MCF 10A (cell line): ENCODE measurements at regions of chr1 and their contacts with region 1.

Region 1: DNA sequence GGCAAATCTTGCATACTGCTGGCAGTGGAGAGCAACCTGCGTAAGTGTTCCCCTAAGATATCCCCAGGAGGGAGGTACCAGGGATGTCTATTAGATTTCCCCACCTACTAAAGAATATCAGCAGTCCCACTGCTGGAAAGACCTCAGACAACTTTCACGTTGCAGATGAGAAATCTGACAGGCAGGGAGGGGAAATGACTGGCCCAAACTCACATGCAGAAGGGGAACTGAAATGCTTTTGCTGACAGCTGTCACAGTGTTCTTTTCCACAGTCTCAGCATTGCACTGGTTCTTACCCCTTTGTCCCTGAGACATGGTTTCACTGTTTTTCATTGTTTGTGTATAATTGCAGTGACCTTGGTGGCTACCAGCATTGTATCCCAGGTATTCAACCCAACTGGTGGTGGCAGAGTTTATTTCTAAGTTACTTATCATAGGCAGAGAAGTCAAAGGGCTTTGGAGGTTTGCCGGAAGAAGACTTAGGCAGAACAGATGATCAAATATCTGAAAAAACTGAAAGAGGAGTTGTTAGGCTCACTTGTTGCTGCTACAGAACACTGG is 84.8 kb upstream of the ATP1A1 start:
- DNase-seq: no peak
- H3K4me3 Mint-ChIP-seq: no peak overlapping the region
- H3K27ac Mint-ChIP-seq: peak overlapping the region; percentile 55
- H3K4me1 Mint-ChIP-seq: peaks cover 59% of the 10 kb centered on the region
- H3K27me3 Mint-ChIP-seq: no peaks in the 10 kb centered on the region
- CTCF ChIP-seq: no peak

Region 2: DNA sequence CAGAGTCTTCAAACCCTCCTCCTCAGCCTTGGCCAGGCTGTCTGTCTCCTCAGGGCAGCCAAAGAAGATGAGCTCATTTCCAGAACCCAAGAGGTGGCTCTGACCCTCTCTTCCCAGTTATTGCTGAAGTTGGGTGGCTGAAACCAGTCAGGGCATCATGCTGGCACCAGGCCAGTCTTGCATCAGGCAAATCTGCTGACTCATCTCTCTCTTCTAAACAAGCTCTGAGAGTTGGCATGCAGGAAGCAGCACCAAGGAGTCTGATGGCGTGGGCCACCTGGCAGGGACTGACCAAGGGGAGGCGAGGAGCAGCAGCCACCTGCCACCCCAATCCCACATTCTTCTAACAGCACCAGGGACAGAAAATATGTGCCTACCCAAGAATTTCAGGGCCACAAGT is 20.1 kb before region 1 on chr1:
- CTCF ChIA-PET with region 1: interaction called, 3 read pairs
- POLR2A ChIA-PET with region 1: interaction called, 35 read pairs
- intact Hi-C with region 1: no loop called
- DNase-seq: peak; percentile 98
- H3K4me3 Mint-ChIP-seq: no peak overlapping the region
- H3K27ac Mint-ChIP-seq: peak overlapping the region; percentile 47
- H3K4me1 Mint-ChIP-seq: peaks cover 18% of the 10 kb centered on the region
- H3K27me3 Mint-ChIP-seq: no peaks in the 10 kb centered on the region
- CTCF ChIP-seq: no peak

Region 3: DNA sequence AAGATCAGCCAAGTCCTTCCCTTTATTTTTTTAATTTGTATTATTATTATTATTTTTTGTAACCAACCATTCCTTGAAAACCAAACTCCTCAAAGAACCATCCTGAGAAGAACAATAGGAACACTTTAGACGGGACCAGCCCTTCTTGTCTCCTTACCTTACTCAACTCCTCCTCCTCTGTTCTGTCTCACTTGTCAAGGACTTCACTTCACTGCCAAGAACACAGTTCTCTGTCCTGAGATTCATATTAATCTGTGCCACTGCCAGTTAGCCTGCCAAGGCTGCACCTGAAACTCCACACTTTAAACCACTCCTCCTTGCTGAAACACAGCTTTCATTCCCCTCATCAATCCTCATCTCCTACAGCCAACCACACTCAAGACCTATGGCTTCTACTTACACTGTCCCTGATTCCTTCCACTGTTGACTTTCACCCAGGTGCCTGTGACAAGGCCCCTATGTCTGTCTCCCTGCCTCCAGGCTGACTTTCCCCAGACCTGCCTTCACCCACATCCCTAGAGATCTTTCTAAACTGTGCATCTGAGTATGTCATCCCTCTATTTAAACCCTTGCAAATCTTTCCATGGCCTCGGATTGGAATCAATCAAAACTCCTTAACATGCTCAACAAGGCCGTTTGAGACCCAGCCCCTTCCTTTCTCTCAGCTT is 11.1 kb after region 1 on chr1:
- CTCF ChIA-PET with region 1: no interaction called
- POLR2A ChIA-PET with region 1: interaction called, 10 read pairs
- intact Hi-C with region 1: no loop called
- DNase-seq: no peak
- H3K4me3 Mint-ChIP-seq: no peak overlapping the region
- H3K27ac Mint-ChIP-seq: peak overlapping the region; percentile 12
- H3K4me1 Mint-ChIP-seq: peaks cover 12% of the 10 kb centered on the region
- H3K27me3 Mint-ChIP-seq: no peaks in the 10 kb centered on the region
- CTCF ChIP-seq: no peak

Region 4: DNA sequence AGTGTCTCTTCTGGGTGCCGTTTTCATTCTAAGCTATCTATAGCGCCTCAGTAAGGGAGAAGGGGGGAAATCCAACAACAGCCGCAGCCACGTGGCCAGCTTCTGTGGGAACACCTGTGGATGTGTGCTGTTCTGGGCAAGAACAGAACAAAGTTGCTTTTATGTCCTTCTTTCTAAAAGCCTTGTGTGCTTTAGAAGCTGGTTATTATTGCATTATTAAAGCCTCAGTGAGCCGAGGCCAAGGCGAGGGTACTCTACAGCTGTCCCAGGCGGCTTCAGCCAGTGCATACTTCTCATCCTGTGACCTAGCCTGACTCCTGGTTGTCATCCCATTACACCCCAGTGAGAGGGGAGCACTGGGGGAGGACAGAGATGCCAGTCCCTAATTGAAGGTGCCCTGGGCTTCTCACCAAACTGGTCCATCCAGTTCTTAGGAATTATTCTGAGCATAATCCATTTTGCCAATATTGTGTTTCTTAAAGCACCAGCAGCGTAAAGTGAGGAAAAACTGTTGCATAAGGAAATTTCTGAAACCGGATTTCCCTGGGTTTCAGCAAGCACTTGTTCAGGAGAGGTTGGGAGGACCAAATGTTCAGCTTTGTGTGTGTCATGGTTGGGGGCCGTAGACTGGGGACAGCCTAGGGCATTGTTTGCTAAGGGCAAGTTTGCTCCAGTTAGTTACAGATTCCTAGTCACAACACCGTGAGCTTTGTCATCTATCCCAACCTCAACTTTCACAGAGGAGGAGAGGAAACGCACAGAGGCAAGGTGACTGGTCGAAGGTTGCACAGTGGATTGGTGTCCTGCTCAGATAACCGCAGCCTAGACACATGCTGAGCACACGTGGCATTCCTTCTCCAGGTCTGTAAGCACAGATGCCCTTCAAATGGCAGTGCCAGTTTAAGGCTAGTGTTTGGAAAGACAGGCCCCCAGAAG is 23.7 kb after region 1 on chr1:
- CTCF ChIA-PET with region 1: no interaction called
- POLR2A ChIA-PET with region 1: interaction called, 23 read pairs
- intact Hi-C with region 1: no loop called
- DNase-seq: no peak
- H3K4me3 Mint-ChIP-seq: no peak overlapping the region
- H3K27ac Mint-ChIP-seq: no peak overlapping the region
- H3K4me1 Mint-ChIP-seq: peaks cover 11% of the 10 kb centered on the region
- H3K27me3 Mint-ChIP-seq: no peaks in the 10 kb centered on the region
- CTCF ChIP-seq: no peak

Region 5: DNA sequence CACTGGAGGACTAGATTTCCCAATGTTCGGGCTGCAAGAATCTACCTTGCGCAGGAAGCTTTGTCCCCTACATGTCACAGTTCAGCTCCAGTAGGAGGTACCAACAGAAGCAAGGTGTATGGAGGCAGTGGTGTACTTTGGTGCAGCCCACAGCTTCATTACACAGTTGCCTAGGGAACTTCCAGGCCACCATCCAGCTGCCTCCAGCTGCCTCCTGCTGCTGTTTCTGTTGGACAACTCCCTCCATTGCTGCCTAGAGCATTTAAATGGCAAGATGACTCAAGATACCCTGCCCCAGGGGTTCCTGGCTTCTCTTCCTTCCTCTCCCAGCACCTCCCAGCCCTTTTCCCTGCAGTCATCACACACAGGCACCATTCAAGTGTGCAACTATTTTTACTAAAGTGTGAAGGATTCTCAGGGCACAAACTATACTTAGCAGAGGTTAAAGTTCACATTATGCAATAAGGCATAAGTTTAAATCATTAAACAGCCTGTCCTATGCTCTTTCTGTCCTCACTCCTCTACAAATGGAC is 45.8 kb after region 1 on chr1:
- CTCF ChIA-PET with region 1: no interaction called
- POLR2A ChIA-PET with region 1: interaction called, 13 read pairs
- intact Hi-C with region 1: no loop called
- DNase-seq: peak; percentile 94
- H3K4me3 Mint-ChIP-seq: no peak overlapping the region
- H3K27ac Mint-ChIP-seq: no peak overlapping the region
- H3K4me1 Mint-ChIP-seq: peaks cover 24% of the 10 kb centered on the region
- H3K27me3 Mint-ChIP-seq: no peaks in the 10 kb centered on the region
- CTCF ChIP-seq: no peak

Region 6: DNA sequence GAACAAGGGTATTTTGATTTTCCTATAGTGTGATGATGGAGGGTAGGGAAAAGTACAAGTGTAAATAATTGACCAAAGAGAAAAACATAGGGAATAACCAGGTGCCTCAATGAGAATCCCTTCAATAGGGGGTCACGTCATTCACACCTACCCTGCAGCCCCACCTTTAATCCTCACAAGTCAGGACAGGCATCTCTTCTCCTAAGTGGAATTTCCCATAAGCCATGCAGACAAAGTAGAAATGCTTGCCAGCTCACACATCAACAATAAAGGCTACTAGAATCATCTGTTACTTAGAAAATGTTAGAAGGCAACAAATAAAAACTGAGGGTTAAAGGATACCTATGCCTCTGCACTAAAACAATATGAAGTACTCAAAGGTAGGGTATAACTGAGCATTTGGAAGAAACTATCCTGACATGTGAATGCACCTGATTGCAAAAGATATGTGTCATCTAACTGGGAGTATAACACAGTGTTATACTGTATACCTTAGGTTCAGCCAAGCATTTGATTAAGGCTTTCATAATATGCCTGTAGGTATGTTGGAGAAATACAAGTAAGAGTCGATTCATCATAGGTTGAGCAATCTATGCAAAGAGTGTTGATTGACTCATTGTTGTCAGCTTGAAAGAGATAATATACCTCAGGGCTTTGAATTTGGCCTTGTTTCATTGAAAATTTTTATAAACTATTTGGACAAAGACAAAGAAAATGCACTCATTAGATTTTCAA is 52.4 kb after region 1 on chr1:
- CTCF ChIA-PET with region 1: interaction called, 3 read pairs
- POLR2A ChIA-PET with region 1: interaction called, 20 read pairs
- intact Hi-C with region 1: no loop called
- DNase-seq: peak; percentile 92
- H3K4me3 Mint-ChIP-seq: peak overlapping the region; percentile 16
- H3K27ac Mint-ChIP-seq: peak overlapping the region; percentile 63
- H3K4me1 Mint-ChIP-seq: peaks cover 19% of the 10 kb centered on the region
- H3K27me3 Mint-ChIP-seq: no peaks in the 10 kb centered on the region
- CTCF ChIP-seq: no peak

Region 7: GRCh38 chr1:116418091-116418830 is 130.0 kb after region 1 on chr1:
- CTCF ChIA-PET with region 1: no interaction called
- POLR2A ChIA-PET with region 1: no interaction called
- intact Hi-C with region 1: no loop called
- DNase-seq: peak; percentile 70
- H3K4me3 Mint-ChIP-seq: peak overlapping the region; percentile 85
- H3K27ac Mint-ChIP-seq: peak overlapping the region; percentile 50
- H3K4me1 Mint-ChIP-seq: peaks cover 6% of the 10 kb centered on the region
- H3K27me3 Mint-ChIP-seq: no peaks in the 10 kb centered on the region
- CTCF ChIP-seq: no peak